ENCODE measurements at regions of chr10 and their contacts with region 1.

Region 1: DNA sequence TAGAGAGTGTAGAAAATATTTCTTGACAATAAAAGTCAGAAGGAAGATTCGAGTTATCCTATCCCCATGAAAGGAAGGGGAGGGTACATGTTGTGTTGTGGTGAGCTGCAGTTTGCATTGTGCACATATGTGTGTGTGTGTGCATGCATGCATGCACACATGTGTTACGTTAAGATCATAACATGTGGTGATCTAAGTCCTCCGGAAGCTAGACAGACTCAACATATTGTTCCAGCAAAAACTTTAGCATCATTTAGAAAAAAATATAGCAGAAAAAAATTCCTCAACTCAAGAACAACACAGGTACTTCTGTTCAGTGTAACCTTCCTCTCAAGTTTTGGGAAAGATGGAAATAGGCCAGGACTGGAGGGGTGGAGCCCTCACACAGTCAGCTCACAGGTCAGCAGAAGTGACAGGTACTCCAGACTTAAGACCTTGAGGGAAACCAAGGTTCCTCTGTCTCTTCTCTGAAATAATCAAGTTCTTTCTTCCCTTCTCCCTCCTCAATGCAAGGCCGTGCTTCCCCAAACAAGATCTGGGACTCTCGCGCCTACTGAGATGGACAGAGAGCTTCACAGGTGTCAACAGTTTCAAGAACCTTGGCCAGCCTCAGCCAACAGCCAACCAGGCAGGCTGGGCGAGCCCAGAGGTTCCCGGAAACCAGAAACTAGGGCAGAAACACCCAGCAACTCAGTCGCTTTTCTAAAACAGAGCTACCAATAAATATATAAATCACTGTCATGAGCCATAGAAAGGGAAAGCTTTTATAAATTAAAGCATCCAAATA is 205.2 kb downstream of the FAM107B start:
- DNase-seq: no peak
- H3K4me3 ChIP-seq: no peak overlapping the region
- H3K27ac ChIP-seq: no peak overlapping the region
- H3K4me1 ChIP-seq: no peaks in the 10 kb centered on the region; a peak in 2 of 7 replicates
- H3K27me3 ChIP-seq: no peaks in the 10 kb centered on the region
- CTCF ChIP-seq: no peak
- EP300 ChIP-seq: no peak
- POLR2A ChIP-seq: no peak
- RAD21 ChIP-seq: no peak

Region 2: GRCh38 chr10:14556285-14556956 is 13.0 kb before region 1 on chr10:
- CTCF ChIA-PET with region 1: interaction called, 17 read pairs
- POLR2A ChIA-PET with region 1: interaction called, 3 read pairs
- DNase-seq: no peak
- H3K4me3 ChIP-seq: no peak overlapping the region
- H3K27ac ChIP-seq: no peak overlapping the region
- H3K4me1 ChIP-seq: peaks cover 0 to 18% (median 13%) of the 10 kb centered on the region in 4 experiments; a peak in 6 of 7 replicates
- H3K27me3 ChIP-seq: no peaks in the 10 kb centered on the region
- CTCF ChIP-seq: peak; percentile 48 to 77 (median 75)
- EP300 ChIP-seq: no peak
- POLR2A ChIP-seq: no peak
- RAD21 ChIP-seq: peak; percentile 66 to 70